ENCODE measurements at regions of chr12 and their contacts with region 1.

Region 1: GRCh38 chr12:118035246-118036041 is 18.9 kb downstream of the RFC5 start:
- DNase-seq: peak; percentile 55
- H3K4me3 Mint-ChIP-seq: peak overlapping the region; percentile 31
- H3K27ac Mint-ChIP-seq: peak overlapping the region; percentile 94
- H3K4me1 Mint-ChIP-seq: peaks cover 57% of the 10 kb centered on the region
- H3K27me3 Mint-ChIP-seq: no peaks in the 10 kb centered on the region

Region 2: GRCh38 chr12:117890137-117890536 is 145.3 kb before region 1 on chr12:
- CTCF ChIA-PET with region 1: no interaction called
- POLR2A ChIA-PET with region 1: no interaction called
- intact Hi-C with region 1: no loop called
- DNase-seq: no peak
- H3K4me3 Mint-ChIP-seq: no peak overlapping the region
- H3K27ac Mint-ChIP-seq: no peak overlapping the region
- H3K4me1 Mint-ChIP-seq: peaks cover 4% of the 10 kb centered on the region
- H3K27me3 Mint-ChIP-seq: peaks cover 10% of the 10 kb centered on the region

Region 3: GRCh38 chr12:117998719-117999118 is 36.7 kb before region 1 on chr12:
- CTCF ChIA-PET with region 1: no interaction called
- POLR2A ChIA-PET with region 1: no interaction called
- intact Hi-C with region 1: no loop called
- DNase-seq: no peak
- H3K4me3 Mint-ChIP-seq: no peak overlapping the region
- H3K27ac Mint-ChIP-seq: no peak overlapping the region
- H3K4me1 Mint-ChIP-seq: peaks cover 13% of the 10 kb centered on the region
- H3K27me3 Mint-ChIP-seq: peaks cover 1% of the 10 kb centered on the region

Region 4: DNA sequence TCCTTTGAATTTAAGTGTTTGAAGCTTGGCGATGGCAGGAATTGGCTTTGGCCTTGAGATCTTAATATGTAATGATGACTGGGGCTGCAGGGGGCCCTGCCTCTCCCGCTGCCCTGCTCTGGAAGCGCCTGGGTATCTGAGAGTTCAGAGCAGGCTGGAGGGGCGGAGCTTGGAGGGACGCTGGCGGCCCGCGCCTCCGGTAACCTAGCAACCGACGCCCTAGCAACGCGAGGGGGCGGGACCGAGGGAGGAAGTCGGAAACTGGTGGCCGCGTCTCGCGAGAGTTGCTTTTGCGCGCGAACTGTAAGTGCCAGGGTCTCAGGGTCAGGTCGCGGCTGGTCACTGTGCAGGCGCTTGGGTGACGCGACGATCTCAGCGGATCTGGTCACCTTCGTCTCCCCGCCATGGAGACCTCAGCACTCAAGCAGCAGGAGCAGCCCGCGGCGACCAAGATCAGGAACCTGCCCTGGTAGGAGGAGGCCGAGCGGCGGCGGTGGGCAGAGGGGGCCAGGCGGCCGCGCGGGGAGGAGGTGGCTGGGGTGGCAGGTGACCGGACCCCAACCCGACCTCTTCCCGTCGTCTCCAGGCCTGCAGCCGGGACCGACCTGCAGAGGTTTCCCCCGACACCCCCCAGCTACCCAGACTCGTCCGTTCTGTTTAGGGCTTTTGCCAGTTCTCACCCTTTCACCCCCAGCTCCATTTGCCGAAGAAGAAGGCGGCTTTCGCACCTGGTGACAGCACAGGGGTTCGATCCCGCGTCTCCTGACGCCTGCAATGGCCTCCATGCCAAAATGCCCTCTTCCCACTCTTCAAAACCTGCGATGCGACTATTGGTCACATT is 18.8 kb before region 1 on chr12 and contains the start of gene RFC5:
- CTCF ChIA-PET with region 1: interaction called, 9 read pairs
- POLR2A ChIA-PET with region 1: interaction called, 17 read pairs
- intact Hi-C with region 1: loop called (anchors 2 kb)
- DNase-seq: peak; percentile 98
- H3K4me3 Mint-ChIP-seq: peak within 1 kb of the TSS; percentile 94
- H3K27ac Mint-ChIP-seq: peak within 1 kb of the TSS; percentile 82
- H3K4me1 Mint-ChIP-seq: peaks cover 28% of the 10 kb centered on the region
- H3K27me3 Mint-ChIP-seq: peaks cover 2% of the 10 kb centered on the region
- total RNA-seq, gene RFC5: 65.8 to 70.8 TPM

Region 5: DNA sequence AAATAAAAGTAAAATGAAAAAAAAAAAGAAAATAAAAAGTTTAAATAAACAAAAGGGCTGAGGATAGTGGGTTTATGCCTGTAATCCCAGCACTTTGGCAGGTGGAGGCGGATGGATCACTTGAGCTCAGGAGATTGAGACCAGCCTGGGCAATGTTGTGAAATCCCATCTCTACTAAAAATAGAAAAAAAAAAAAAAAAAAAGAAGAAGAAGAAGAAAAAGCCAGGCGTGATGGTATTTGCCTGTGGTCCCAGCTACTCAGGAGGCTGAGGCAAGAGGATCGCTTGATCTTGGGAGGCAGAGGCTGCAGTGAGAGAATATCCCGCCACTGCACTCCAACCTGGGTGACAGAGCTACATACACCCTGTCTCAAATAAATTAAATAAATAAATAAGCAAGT is 333.4 kb after region 1 on chr12:
- CTCF ChIA-PET with region 1: no interaction called
- POLR2A ChIA-PET with region 1: no interaction called
- intact Hi-C with region 1: no loop called
- DNase-seq: no peak
- H3K4me3 Mint-ChIP-seq: no peak overlapping the region
- H3K27ac Mint-ChIP-seq: no peak overlapping the region
- H3K4me1 Mint-ChIP-seq: peaks cover 18% of the 10 kb centered on the region
- H3K27me3 Mint-ChIP-seq: no peaks in the 10 kb centered on the region

Region 6: GRCh38 chr12:119673634-119674033 is 1638.2 kb after region 1 on chr12:
- CTCF ChIA-PET with region 1: no interaction called
- POLR2A ChIA-PET with region 1: no interaction called
- intact Hi-C with region 1: loop called (anchors 10 kb)
- DNase-seq: peak; percentile 36
- H3K4me3 Mint-ChIP-seq: no peak overlapping the region
- H3K27ac Mint-ChIP-seq: peak overlapping the region; percentile 92
- H3K4me1 Mint-ChIP-seq: peaks cover 59% of the 10 kb centered on the region
- H3K27me3 Mint-ChIP-seq: no peaks in the 10 kb centered on the region